ENCODE measurements at regions of chr10 and their contacts with region 1.

Region 1: GRCh38 chr10:102835007-102835482 is 2.2 kb downstream of the CYP17A1 start:
- DNase-seq: peak; percentile 80 to 84 (median 81)
- ATAC-seq: peak; percentile 85
- H3K4me3 ChIP-seq: no peak overlapping the region
- H3K27ac ChIP-seq: no peak overlapping the region
- H3K4me1 ChIP-seq: peaks cover 12% of the 10 kb centered on the region
- H3K27me3 ChIP-seq: no peaks in the 10 kb centered on the region
- CTCF ChIP-seq: peak; percentile 66 to 93 (median 85)
- POLR2A ChIP-seq: no peak

Region 2: GRCh38 chr10:102894466-102895213 is 59.6 kb after region 1 on chr10:
- intact Hi-C with region 1: loop called (anchors 5 kb)
- DNase-seq: no peak
- ATAC-seq: no peak
- H3K4me3 ChIP-seq: no peak overlapping the region
- H3K27ac ChIP-seq: no peak overlapping the region
- H3K4me1 ChIP-seq: no peaks in the 10 kb centered on the region
- H3K27me3 ChIP-seq: no peaks in the 10 kb centered on the region
- CTCF ChIP-seq: no peak
- POLR2A ChIP-seq: no peak

Region 3: DNA sequence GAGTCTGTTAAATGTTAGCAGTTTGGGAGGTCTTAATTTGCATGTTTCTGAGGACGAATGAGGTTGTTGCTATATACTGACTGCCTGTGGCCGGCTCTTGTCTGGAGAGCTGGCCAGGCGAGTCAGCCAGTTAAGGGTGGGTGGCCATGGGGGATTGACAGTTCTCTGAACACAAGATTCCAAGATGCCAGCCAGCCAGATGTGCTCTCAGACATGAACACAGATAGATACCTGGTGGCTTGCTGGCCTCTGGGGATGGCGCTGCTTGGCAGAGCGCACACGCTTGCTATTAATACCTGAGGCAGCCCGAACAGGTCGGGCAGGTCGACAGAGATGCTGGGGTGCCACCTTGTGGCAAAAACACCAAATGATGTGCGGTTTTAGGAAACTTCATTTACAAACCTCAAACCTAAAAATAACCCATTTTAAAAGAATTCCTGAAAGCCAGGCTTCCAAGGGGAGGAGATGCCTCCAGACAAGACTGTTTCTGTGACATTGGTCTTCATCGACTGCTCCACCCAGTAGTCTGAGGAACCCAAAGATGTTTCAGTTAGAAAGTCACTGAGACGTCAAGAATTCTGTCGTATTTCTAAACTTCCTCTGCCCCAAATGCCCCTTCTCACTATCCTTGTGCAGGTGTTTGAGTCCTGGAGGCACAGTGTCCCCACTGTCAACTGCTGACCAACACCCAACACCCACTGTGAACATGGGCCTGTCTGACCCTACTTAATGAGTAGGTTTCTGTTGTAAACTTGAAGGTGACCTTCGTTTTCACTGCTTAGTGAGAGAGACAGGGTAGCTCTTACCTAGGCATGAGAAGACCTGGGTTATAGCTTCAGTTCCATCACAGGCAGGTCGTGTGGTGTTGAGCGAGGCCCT is 234.6 kb after region 1 on chr10:
- intact Hi-C with region 1: loop called (anchors 5 kb)
- DNase-seq: peak; percentile 74 to 84 (median 77)
- ATAC-seq: peak; percentile 79
- H3K4me3 ChIP-seq: no peak overlapping the region
- H3K27ac ChIP-seq: no peak overlapping the region
- H3K4me1 ChIP-seq: no peaks in the 10 kb centered on the region
- H3K27me3 ChIP-seq: no peaks in the 10 kb centered on the region
- CTCF ChIP-seq: peak; percentile 44 to 85 (median 73)
- POLR2A ChIP-seq: no peak

Region 4: DNA sequence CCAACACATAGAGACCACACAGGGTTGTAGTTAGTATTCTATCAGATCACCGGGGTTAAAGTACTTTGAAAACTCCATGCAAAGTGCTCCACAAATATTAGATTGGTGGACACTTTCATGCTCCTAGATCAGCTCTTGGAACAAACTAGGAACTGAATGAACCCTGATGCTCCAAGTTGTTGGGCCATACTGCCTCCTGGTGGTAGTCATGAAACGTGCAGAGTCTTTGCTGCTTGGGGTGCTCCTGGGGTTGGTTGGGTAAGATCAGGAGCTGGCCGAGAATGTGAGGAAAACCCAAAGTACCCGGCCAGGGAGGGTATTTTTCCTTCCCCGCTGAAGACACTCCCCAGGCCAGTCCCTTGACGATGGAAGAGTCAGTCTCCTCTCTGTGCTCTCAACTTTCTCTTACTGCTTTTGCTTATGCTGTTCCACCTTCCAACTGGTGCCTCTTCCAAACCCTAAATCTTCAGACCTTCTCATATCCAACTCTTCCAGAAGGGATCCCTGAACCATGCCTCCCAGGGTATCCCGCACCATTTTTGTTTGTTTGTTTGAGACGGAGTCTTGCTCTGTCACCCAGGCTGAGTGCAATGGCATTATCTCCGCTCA is 409.7 kb after region 1 on chr10:
- intact Hi-C with region 1: loop called (anchors 10 kb)
- DNase-seq: peak; percentile 80 to 83 (median 80)
- ATAC-seq: peak; percentile 74
- H3K4me3 ChIP-seq: no peak overlapping the region
- H3K27ac ChIP-seq: no peak overlapping the region
- H3K4me1 ChIP-seq: peaks cover 18% of the 10 kb centered on the region
- H3K27me3 ChIP-seq: no peaks in the 10 kb centered on the region
- CTCF ChIP-seq: peak; percentile 47 to 92 (median 89)
- POLR2A ChIP-seq: no peak

Measured in body of pancreas (tissue), 4 donors.